ENCODE measurements at regions of chr12 and their contacts with region 1.

Region 1: DNA sequence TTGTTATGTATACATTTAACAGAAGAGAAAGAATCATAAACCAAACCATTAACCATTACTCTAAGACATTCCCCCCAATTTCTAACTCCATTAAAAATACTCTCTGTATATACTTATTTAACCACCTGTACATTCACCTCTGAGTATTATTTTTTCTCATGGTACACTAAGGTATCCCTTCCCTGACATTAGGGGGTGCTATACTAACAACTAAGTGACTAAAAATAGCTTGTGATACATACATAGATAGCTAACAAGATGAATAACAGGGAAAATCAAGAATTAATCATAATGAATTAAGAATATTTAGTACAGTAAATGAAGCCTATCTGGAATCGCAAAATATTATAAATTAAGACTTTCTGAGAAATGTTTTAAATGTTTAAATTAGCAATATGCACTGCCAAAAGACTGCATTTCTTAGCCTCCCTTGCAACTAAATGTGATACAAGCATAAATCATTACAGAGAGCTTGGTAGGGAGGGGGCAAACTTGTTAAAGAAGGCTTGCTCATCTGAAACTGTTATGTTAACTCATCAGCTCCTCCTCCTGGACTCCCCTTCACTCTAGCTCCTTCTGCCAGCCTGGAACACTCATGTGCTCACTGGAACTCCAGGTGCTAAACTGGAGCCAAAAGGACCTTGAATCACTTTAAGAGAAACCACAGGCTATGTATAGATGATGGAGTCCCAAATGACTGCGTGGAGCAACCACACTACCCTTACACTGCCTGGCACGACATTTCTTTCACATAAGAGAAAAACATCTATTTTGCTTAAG is 14.9 kb downstream of the C2CD5 start:
- DNase-seq: peak in 1 of 2 experiments; percentile 32
- H3K4me3 ChIP-seq: no peak overlapping the region
- H3K4me3 Mint-ChIP-seq: no peak overlapping the region
- H3K27ac Mint-ChIP-seq: no peak overlapping the region
- H3K4me1 ChIP-seq: peaks cover 5% of the 10 kb centered on the region; the same call in 1 of the 2 replicates
- H3K4me1 Mint-ChIP-seq: peaks cover 6% of the 10 kb centered on the region
- H3K27me3 ChIP-seq: no peaks in the 10 kb centered on the region
- H3K27me3 Mint-ChIP-seq: no peaks in the 10 kb centered on the region
- CTCF ChIP-seq: peak; percentile 63 to 66

Region 2: GRCh38 chr12:22562036-22563028 is 32.9 kb after region 1 on chr12:
- CTCF ChIA-PET with region 1: interaction called, 5 read pairs
- POLR2A ChIA-PET with region 1: no interaction called
- intact Hi-C with region 1: loop called (anchors 2 kb)
- DNase-seq: peak in 1 of 2 experiments; percentile 45
- H3K4me3 ChIP-seq: no peak overlapping the region
- H3K4me3 Mint-ChIP-seq: peak overlapping the region; percentile 8
- H3K27ac Mint-ChIP-seq: peak overlapping the region; percentile 15
- H3K4me1 ChIP-seq: peaks cover 28% of the 10 kb centered on the region
- H3K4me1 Mint-ChIP-seq: peaks cover 31% of the 10 kb centered on the region
- H3K27me3 ChIP-seq: no peaks in the 10 kb centered on the region
- H3K27me3 Mint-ChIP-seq: no peaks in the 10 kb centered on the region
- CTCF ChIP-seq: no peak

Region 3: DNA sequence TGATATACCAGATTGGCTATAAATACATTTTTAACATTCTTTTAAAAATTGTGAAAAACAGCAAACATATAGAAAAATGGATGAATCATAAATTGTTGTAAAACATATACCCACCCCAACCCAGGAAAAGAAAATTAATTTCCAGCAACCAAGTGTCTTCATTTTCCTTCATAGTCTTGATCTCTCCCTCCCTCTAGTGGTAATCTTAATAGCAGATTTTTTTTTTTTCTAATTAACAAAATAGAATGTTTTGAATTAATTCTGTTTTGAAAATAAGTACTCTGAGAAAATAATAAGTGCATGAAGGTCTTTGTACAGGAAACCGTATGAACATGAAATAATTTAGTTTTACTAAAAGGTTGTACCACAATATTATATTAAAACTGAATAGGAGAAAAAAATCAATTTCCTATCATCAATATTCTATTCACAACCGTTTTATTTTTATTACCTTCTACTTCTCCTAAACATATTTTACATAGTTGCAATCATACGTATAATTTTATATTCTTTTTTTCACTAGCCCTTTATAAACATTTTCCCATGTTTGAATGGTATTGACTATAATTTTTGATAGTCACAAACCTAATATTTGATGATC is 102.5 kb after region 1 on chr12:
- CTCF ChIA-PET with region 1: interaction called, 9 read pairs
- POLR2A ChIA-PET with region 1: no interaction called
- intact Hi-C with region 1: loop called (anchors 1 kb)
- DNase-seq: no peak
- H3K4me3 ChIP-seq: no peak overlapping the region
- H3K4me3 Mint-ChIP-seq: no peak overlapping the region
- H3K27ac Mint-ChIP-seq: no peak overlapping the region
- H3K4me1 ChIP-seq: peaks cover 19% of the 10 kb centered on the region
- H3K4me1 Mint-ChIP-seq: peaks cover 7% of the 10 kb centered on the region
- H3K27me3 ChIP-seq: no peaks in the 10 kb centered on the region
- H3K27me3 Mint-ChIP-seq: no peaks in the 10 kb centered on the region
- CTCF ChIP-seq: peak; percentile 71 to 78

Region 4: DNA sequence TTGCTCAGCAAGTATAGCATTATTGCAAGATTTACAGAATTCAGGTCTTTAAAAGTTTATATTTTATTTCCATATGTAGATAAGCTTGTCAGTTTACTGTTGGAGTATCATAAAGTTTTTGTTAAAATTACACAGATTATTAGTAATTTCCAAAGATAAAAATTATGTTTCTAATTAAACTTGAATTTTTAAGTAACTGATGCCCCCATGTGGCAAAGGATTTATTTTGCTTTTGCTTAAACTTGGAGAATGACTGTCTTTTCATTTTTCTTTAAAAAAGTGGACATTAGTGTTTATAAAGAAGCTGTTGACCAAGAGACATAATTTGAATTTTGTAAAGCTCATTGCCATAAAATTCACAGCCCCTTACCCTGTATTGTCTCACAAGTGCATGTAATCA is 141.3 kb after region 1 on chr12:
- CTCF ChIA-PET with region 1: interaction called, 6 read pairs
- POLR2A ChIA-PET with region 1: no interaction called
- intact Hi-C with region 1: loop called (anchors 2 kb)
- DNase-seq: no peak
- H3K4me3 ChIP-seq: no peak overlapping the region
- H3K4me3 Mint-ChIP-seq: no peak overlapping the region
- H3K27ac Mint-ChIP-seq: no peak overlapping the region
- H3K4me1 ChIP-seq: no peaks in the 10 kb centered on the region
- H3K4me1 Mint-ChIP-seq: no peaks in the 10 kb centered on the region
- H3K27me3 ChIP-seq: no peaks in the 10 kb centered on the region
- H3K27me3 Mint-ChIP-seq: no peaks in the 10 kb centered on the region
- CTCF ChIP-seq: peak in 1 of 2 experiments; percentile 36